ENCODE measurements at regions of chr19 and their contacts with region 1.

Region 1: GRCh38 chr19:861763-862580 is 2.5 kb downstream of the CFD start:
- DNase-seq: peak; percentile 69
- H3K4me3 Mint-ChIP-seq: no peak overlapping the region
- H3K27ac Mint-ChIP-seq: no peak overlapping the region
- H3K4me1 Mint-ChIP-seq: peaks cover 21% of the 10 kb centered on the region
- H3K27me3 Mint-ChIP-seq: peaks cover 14% of the 10 kb centered on the region

Region 2: GRCh38 chr19:892243-893050 is 30.5 kb after region 1 on chr19:
- CTCF ChIA-PET with region 1: interaction called, 13 read pairs
- POLR2A ChIA-PET with region 1: no interaction called
- DNase-seq: peak; percentile 54
- H3K4me3 Mint-ChIP-seq: peak overlapping the region; percentile 92
- H3K27ac Mint-ChIP-seq: peak overlapping the region; percentile 98
- H3K4me1 Mint-ChIP-seq: peaks cover 28% of the 10 kb centered on the region
- H3K27me3 Mint-ChIP-seq: no peaks in the 10 kb centered on the region

Region 3: DNA sequence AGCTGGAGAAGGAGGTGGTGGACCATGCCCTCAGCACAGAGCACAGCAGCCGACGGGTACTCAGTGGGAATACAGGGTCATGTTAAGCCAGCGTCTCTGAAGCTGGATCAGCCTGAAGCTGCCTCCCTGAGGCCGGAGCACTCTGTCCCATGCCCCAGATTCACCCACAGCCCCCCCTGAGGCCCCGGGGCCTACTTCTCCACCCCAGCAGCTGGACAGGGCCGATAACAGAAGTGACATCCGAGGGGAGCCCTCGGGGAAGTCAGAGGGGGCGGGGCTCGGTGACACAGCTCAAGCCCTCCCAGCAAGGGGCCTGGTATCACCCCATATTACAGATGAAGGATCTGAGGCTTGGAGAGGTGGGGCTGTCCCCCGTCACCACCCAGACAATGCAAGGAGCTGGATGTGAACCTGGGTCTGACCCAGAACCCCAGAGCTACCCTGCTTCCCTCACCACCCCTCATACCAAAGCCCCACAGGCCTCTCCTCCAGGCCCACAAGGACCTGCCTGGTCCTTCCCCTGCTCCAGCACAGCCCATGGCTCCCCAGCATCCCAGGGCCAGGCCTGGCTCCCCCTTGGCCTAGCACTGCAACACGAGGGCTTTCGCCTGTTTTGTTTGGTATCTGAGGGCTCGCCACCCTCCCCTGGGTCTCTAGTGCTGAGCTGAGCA is 45.3 kb after region 1 on chr19:
- CTCF ChIA-PET with region 1: interaction called, 34 read pairs
- POLR2A ChIA-PET with region 1: no interaction called
- DNase-seq: no peak
- H3K4me3 Mint-ChIP-seq: no peak overlapping the region
- H3K27ac Mint-ChIP-seq: peak overlapping the region; percentile 99
- H3K4me1 Mint-ChIP-seq: peaks cover 60% of the 10 kb centered on the region
- H3K27me3 Mint-ChIP-seq: no peaks in the 10 kb centered on the region

Region 4: GRCh38 chr19:913080-913748 is 51.2 kb after region 1 on chr19 and contains the start of gene R3HDM4:
- CTCF ChIA-PET with region 1: interaction called, 34 read pairs
- POLR2A ChIA-PET with region 1: no interaction called
- DNase-seq: peak; percentile 84
- H3K4me3 Mint-ChIP-seq: peak within 1 kb of the TSS; percentile 83
- H3K27ac Mint-ChIP-seq: peak within 1 kb of the TSS; percentile 93
- H3K4me1 Mint-ChIP-seq: peaks cover 37% of the 10 kb centered on the region
- H3K27me3 Mint-ChIP-seq: peaks cover 4% of the 10 kb centered on the region
- total RNA-seq, gene R3HDM4: 120 to 121 TPM